ENCODE measurements at regions of chr19 and their contacts with region 1.

Region 1: GRCh38 chr19:41303954-41304353 is 6.0 kb upstream of the CCDC97 start:
- DNase-seq: peak; percentile 14
- ATAC-seq: no peak
- H3K4me3 Mint-ChIP-seq: no peak overlapping the region
- H3K27ac Mint-ChIP-seq: peak overlapping the region; percentile 83
- H3K4me1 Mint-ChIP-seq: peaks cover 93% of the 10 kb centered on the region
- H3K27me3 Mint-ChIP-seq: no peaks in the 10 kb centered on the region
- CTCF ChIP-seq: no peak

Region 2: DNA sequence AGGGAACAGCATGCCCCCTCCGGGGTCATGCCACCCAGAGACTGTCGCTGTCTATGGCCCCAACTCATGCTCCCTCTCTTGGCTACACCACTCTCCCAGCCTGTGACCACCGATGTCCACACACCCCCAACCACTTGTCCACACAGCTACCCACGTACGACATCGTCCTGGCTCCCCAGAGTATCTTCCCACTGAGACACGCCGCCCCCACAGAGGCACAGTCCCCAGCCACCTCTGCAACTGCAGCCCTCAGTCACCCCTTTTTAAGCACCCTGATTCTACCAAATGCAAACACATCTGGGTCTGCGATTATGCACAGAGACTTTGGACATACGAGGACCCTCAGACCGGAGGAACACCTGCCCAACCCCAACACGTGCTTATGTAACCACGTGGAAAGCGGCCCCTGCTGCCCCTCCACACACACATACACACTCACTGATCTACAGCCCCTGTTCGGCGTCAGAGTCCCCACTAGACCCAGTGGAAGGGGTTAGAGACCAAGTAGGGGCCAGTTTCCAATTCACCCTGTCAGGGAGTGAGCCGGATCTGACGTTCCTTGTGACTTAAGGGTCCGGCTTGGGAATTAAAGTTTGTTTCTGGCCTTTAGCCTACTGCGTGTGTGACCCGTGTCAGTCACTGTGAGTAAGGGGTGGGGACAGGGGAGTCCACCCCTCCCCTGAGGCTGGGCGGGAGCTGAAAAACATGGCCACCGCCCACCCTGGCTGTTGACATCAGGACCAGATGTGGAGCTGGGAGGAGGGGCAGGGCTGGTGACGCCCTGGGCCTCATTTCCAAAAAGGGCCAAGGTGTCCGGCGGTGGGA is 96.8 kb before region 1 on chr19:
- CTCF ChIA-PET with region 1: interaction called, 28 read pairs
- POLR2A ChIA-PET with region 1: interaction called, 12 read pairs
- intact Hi-C with region 1: loop called (anchors 5 kb)
- DNase-seq: no peak
- ATAC-seq: no peak
- H3K4me3 Mint-ChIP-seq: no peak overlapping the region
- H3K27ac Mint-ChIP-seq: no peak overlapping the region
- H3K4me1 Mint-ChIP-seq: peaks cover 7% of the 10 kb centered on the region
- H3K27me3 Mint-ChIP-seq: no peaks in the 10 kb centered on the region
- CTCF ChIP-seq: no peak

Region 3: DNA sequence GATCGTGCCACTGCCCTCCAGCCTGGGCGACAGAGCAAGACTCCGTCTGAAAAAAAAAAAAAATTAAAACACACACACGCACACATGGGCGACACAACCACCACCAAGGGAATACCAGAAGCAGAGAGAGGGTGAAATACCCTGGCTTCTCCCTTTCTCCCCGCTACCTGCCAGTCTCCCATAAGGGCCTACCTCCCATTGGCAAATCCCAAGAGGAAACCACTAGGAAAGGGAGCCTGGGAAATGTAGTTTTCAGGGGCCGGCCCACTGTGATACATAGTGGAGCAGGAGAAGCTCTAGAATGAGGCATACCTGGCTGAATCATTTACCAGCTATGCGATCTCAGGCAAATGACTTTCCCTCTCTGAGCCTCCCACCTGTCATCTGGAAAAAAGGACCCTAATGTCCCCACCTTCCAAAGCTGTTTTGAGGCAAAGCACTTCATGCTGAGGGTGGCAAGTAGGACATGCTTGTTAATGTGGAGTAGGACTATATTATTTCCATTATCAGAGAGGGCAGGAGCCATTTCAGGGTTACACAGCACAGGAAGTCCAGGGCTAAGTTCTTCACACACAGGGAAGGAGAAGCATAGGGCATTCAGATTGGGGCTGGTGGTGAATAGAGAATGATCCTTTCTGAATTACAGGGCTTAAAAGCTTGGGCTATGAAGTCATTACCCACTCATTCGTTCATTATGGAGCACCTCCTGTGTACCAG is 54.1 kb before region 1 on chr19:
- CTCF ChIA-PET with region 1: no interaction called
- POLR2A ChIA-PET with region 1: no interaction called
- intact Hi-C with region 1: no loop called
- DNase-seq: no peak
- ATAC-seq: no peak
- H3K4me3 Mint-ChIP-seq: no peak overlapping the region
- H3K27ac Mint-ChIP-seq: no peak overlapping the region
- H3K4me1 Mint-ChIP-seq: no peaks in the 10 kb centered on the region
- H3K27me3 Mint-ChIP-seq: peaks cover 7% of the 10 kb centered on the region
- CTCF ChIP-seq: no peak